ENCODE measurements at regions of chr19 and their contacts with region 1.

Region 1: DNA sequence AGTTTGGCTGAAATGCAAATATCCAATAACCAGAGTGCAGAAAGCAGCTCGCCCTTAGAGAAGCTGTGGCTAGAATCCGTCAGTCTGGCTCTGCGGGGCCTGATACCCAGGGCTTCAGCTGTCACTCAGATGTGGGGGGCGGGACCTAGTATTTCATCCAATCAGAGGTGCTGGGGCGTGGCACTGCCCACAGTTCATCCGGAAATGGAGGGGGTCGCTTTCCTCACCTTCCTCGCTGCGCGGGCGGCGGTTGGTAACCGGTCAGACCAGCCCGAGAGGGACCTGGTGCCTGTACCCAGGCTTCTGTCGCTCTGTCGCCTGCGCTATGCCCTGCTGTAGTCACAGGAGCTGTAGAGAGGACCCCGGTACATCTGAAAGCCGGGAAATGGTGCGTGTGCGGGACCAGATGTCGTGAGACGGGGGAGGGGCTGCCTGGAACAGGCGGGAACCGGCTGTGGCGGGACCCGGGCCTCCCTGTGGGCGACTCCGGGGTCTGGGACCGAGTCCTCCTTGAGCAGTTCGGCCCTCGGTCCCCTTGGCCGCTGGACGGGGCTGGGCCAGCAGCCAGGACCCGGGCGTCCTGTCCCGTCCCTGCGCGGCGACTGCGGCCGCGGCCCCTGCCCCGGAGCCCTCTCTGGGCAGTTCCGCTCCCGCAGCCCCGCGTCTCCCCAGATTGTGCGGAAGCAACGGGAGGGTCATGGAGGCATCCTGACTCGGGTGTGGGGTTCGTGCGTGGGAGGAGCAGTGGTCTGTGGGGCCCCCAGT is at the start of gene ZNF700:
- H3K4me3 Mint-ChIP-seq: peak within 1 kb of the TSS; percentile 84
- H3K27ac Mint-ChIP-seq: peak within 1 kb of the TSS; percentile 98
- H3K4me1 Mint-ChIP-seq: peaks cover 40% of the 10 kb centered on the region
- H3K27me3 Mint-ChIP-seq: peaks cover 5% of the 10 kb centered on the region

Region 2: GRCh38 chr19:10363789-10364281 is 1561.2 kb before region 1 on chr19:
- intact Hi-C with region 1: no loop called
- H3K4me3 Mint-ChIP-seq: no peak overlapping the region
- H3K27ac Mint-ChIP-seq: no peak overlapping the region
- H3K4me1 Mint-ChIP-seq: no peaks in the 10 kb centered on the region
- H3K27me3 Mint-ChIP-seq: no peaks in the 10 kb centered on the region

Region 3: GRCh38 chr19:11539495-11540365 is 385.3 kb before region 1 on chr19:
- intact Hi-C with region 1: no loop called
- H3K4me3 Mint-ChIP-seq: no peak overlapping the region
- H3K27ac Mint-ChIP-seq: no peak overlapping the region
- H3K4me1 Mint-ChIP-seq: peaks cover 9% of the 10 kb centered on the region
- H3K27me3 Mint-ChIP-seq: peaks cover 43% of the 10 kb centered on the region

Region 4: DNA sequence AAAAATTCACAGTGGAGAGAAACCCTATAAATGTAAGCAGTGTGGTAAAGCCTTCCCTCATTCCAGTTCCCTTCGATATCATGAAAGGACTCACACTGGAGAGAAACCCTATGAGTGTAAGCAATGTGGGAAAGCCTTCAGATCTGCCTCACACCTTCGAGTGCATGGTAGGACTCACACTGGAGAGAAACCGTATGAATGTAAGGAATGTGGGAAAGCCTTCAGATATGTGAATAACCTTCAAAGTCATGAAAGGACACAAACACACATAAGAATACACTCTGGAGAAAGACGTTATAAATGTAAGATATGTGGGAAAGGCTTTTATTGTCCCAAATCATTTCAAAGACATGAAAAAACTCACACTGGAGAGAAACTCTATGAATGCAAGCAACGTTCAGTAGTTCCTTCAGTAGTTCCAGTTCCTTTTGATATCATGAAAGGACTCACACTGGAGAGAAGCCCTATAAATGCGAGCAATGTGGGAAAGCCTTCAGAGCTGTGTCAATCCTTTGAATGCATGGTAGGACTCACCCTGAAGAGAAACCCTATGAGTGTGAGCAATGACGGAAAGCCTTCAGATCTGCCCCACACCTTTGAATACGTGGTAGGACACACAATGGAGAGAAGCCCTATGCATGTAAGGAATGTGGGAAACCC is 92.7 kb before region 1 on chr19:
- intact Hi-C with region 1: no loop called
- H3K4me3 Mint-ChIP-seq: no peak overlapping the region
- H3K27ac Mint-ChIP-seq: no peak overlapping the region
- H3K4me1 Mint-ChIP-seq: no peaks in the 10 kb centered on the region
- H3K27me3 Mint-ChIP-seq: no peaks in the 10 kb centered on the region

Region 5: GRCh38 chr19:11881151-11881800 is 43.8 kb before region 1 on chr19:
- intact Hi-C with region 1: loop called (anchors 5 kb)
- H3K4me3 Mint-ChIP-seq: no peak overlapping the region
- H3K27ac Mint-ChIP-seq: no peak overlapping the region
- H3K4me1 Mint-ChIP-seq: no peaks in the 10 kb centered on the region
- H3K27me3 Mint-ChIP-seq: peaks cover 6% of the 10 kb centered on the region

Region 6: GRCh38 chr19:11964858-11965645 is 40.0 kb after region 1 on chr19 and contains the start of gene ZNF763:
- intact Hi-C with region 1: loop called (anchors 1 kb)
- H3K4me3 Mint-ChIP-seq: peak within 1 kb of the TSS; percentile 93
- H3K27ac Mint-ChIP-seq: peak within 1 kb of the TSS; percentile 92
- H3K4me1 Mint-ChIP-seq: peaks cover 42% of the 10 kb centered on the region
- H3K27me3 Mint-ChIP-seq: no peaks in the 10 kb centered on the region

Region 7: DNA sequence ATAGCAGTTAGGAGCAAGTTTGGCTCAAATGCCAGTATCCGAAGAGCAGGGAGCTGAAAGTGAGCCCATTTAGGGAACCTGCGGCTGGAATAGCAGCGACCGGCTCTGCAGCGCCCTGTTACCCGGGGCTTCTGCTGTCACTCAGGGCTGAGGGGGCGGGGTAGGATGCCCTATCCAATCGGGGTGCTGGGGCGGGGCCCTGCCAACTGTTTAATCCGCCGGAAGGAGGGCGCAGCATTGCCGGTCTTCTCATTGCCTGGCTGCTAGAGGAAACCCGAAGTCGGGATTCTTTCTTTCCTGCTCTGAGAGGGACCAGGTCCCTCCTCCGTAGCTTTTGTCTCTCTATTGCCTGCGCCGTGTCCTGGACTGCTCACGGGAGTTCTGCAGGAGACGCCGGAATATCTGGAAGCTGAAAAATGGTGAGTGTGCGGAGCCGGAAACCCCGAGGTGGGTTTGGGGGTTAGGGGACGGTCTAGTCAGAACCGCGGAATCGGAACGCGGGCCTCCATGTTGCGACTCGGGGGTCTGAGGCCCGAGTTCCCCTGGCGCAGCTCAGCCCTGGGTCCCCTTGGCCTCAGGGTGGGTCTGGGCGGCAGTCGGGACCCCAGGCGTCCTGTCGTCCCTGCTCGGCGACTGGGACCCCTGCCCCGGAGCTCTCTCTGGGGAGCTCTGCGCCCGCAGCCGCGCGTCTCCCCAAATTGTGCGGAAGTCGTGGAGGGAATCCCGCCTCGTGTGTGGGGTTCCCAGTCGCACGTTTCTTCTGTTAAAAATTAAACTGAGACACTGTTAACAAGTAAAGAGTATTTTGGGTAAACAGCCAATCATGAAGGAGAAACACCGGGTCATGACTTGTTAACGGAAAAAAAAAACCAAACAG is 62.6 kb after region 1 on chr19:
- intact Hi-C with region 1: loop called (anchors 1 kb)
- H3K4me3 Mint-ChIP-seq: peak overlapping the region; percentile 98
- H3K27ac Mint-ChIP-seq: peak overlapping the region; percentile 97
- H3K4me1 Mint-ChIP-seq: peaks cover 25% of the 10 kb centered on the region
- H3K27me3 Mint-ChIP-seq: peaks cover 2% of the 10 kb centered on the region

Region 8: GRCh38 chr19:12052497-12053169 is 127.6 kb after region 1 on chr19 and contains the start of gene ZNF878:
- intact Hi-C with region 1: loop called (anchors 5 kb)
- H3K4me3 Mint-ChIP-seq: peak within 1 kb of the TSS; percentile 82
- H3K27ac Mint-ChIP-seq: peak within 1 kb of the TSS; percentile 34
- H3K4me1 Mint-ChIP-seq: peaks cover 22% of the 10 kb centered on the region
- H3K27me3 Mint-ChIP-seq: peaks cover 55% of the 10 kb centered on the region

Region 9: DNA sequence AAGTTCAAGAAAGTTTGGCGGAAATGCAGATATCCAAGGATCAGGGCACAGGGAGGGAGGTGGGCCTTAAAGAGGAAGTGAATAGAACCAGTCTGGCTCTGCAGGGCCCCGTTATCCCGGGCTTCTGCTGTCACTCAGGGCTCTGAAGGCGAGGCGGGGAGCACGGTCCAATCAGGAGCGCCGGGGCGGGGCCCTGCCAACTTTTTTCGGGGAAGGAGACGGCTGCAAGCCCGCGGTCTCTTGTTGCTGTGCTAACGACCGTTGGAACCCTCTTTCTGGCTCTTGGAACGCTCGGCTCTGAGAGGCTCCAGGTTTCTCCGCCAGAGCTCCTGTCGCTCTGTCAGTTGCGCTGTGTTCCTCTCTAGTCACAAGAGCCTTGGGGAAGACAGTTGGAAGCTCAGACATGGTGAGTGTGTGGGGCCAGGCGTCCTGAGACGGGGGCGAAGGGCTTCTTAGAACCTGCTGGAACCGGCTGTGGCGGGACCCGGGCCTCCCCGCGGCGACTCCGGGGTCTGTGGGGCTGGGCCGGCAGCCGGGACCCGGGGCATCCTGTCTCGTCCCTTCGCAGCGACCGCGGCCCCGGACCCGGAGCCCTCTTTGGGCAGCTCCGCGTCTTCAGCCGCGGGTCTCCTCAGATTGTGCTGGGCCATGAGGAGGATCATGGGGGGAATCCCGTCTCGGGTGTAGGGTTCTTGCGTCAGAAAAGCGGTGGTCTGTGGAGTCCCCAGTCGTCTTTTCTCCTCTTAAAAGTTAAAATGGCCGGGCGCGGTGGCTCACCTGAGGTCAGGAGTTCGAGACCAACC is 167.2 kb after region 1 on chr19:
- intact Hi-C with region 1: loop called (anchors 1 kb)
- H3K4me3 Mint-ChIP-seq: peak overlapping the region; percentile 84
- H3K27ac Mint-ChIP-seq: peak overlapping the region; percentile 81
- H3K4me1 Mint-ChIP-seq: peaks cover 14% of the 10 kb centered on the region
- H3K27me3 Mint-ChIP-seq: no peaks in the 10 kb centered on the region

Measured in dendritic cell treated with granulocyte-macrophage colony-stimulating factor and Interleukin-4, amounts not matched to agents 40 ng/mL and 50 ng/mL, for 4 days (primary cell).